Activated T-helper 2 cell treated with anti-CD3 and anti-CD28 coated beads, Interferon-gamma antibody, Interleukin-2, Interleukin-4, amounts not matched to agents 10 μg/mL and 5 μg/mL and 100 μg/mL, durations not matched to agents 14 hours and 24 hours and 36 hours (primary cell): ENCODE measurements at regions of chr6 and their contacts with region 1.

Region 1: DNA sequence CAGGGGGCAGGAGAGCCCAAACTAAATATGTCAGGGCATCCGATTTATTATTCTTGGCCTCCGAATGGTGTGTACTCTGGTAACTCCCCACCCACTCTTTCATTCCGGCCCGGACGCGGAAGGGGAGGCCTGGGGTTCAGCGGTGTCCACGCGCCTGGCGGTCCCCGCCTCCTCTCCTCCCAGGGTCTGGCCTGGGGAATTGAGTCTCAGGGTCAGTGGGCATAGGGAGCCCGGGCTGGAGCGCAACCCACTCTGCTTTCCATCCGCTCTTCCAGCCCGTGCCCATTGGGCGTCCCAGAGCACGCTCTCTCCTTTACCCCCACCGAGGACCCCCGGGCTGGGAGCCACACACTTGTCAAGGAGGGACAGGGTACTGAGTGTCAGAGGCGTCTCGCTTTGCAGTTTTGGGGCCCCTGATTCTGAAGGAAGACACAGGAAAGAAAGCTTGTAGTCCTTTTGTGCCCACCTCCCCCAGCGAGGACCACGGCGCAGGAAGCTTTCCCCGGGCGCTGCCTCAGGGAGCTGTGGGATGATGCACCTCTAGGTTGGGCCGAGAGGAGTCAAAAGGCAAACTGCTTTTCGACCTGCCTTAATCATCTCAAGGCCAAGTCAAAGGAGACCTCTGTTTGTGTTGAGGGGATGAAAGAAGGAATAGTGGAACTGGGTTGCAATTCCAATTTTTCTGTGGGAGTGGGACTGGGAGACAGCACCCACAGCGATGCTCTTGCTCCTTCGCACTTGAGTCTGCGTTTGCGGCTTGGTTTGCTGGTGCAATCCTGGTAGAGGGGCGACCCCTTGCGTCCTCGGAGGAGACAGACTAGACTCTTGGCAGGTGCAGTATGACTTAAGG is 2.5 kb downstream of the RSPO3 start:
- DNase-seq: peak; percentile 55
- H3K4me3 Mint-ChIP-seq: no peak overlapping the region
- H3K27ac Mint-ChIP-seq: no peak overlapping the region
- H3K4me1 Mint-ChIP-seq: peaks cover 15% of the 10 kb centered on the region
- H3K27me3 Mint-ChIP-seq: peaks cover 59% of the 10 kb centered on the region

Region 2: GRCh38 chr6:126361832-126362412 is 759.1 kb before region 1 on chr6:
- intact Hi-C with region 1: loop called (anchors 1 kb)
- DNase-seq: no peak
- H3K4me3 Mint-ChIP-seq: no peak overlapping the region
- H3K27ac Mint-ChIP-seq: no peak overlapping the region
- H3K4me1 Mint-ChIP-seq: no peaks in the 10 kb centered on the region
- H3K27me3 Mint-ChIP-seq: no peaks in the 10 kb centered on the region

Region 3: GRCh38 chr6:126804332-126805064 is 316.5 kb before region 1 on chr6:
- intact Hi-C with region 1: loop called (anchors 1 kb)
- DNase-seq: no peak
- H3K4me3 Mint-ChIP-seq: no peak overlapping the region
- H3K27ac Mint-ChIP-seq: no peak overlapping the region
- H3K4me1 Mint-ChIP-seq: no peaks in the 10 kb centered on the region
- H3K27me3 Mint-ChIP-seq: no peaks in the 10 kb centered on the region